ENCODE measurements at regions of chr21 and their contacts with region 1.

Region 1: DNA sequence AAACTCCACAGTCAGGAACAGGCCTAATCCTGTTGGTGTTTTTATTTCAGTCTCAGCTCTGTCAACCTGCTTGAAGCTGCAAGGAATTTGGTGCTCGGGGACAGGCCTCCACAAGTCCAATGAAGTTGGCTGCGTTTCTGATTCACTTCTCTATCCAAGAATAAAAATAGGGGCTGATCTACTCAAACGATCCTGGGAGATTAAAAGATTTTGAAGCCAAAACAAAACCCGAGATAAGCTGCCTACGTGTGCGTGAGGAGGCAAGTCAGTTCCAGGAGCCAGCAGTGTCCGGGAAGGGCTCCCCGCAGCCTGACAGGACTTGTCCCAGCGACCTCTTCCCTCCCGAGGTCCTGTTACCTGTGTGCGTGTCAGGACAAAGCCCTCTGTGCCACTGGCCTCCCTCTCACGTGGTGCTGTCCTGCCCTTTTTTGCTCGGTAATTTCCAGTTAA is 98.0 kb downstream of the ETS2 start:
- DNase-seq: no peak
- H3K4me3 ChIP-seq: no peak overlapping the region
- H3K27ac ChIP-seq: peak overlapping the region; percentile 88 to 95 (median 93)
- H3K4me1 ChIP-seq: peaks cover 25 to 53% (median 28%) of the 10 kb centered on the region in 3 donors
- H3K27me3 ChIP-seq: no peaks in the 10 kb centered on the region
- CTCF ChIP-seq: no peak
- POLR2A ChIP-seq: peak in 1 of 4 donors; percentile 2

Region 2: GRCh38 chr21:38605236-38605635 is 298.5 kb before region 1 on chr21:
- intact Hi-C with region 1: no loop called
- DNase-seq: no peak
- H3K4me3 ChIP-seq: no peak overlapping the region
- H3K27ac ChIP-seq: no peak overlapping the region
- H3K4me1 ChIP-seq: no peaks in the 10 kb centered on the region
- H3K27me3 ChIP-seq: peaks cover 0 to 2% (median 0%) of the 10 kb centered on the region in 4 donors
- CTCF ChIP-seq: no peak
- POLR2A ChIP-seq: no peak

Region 3: DNA sequence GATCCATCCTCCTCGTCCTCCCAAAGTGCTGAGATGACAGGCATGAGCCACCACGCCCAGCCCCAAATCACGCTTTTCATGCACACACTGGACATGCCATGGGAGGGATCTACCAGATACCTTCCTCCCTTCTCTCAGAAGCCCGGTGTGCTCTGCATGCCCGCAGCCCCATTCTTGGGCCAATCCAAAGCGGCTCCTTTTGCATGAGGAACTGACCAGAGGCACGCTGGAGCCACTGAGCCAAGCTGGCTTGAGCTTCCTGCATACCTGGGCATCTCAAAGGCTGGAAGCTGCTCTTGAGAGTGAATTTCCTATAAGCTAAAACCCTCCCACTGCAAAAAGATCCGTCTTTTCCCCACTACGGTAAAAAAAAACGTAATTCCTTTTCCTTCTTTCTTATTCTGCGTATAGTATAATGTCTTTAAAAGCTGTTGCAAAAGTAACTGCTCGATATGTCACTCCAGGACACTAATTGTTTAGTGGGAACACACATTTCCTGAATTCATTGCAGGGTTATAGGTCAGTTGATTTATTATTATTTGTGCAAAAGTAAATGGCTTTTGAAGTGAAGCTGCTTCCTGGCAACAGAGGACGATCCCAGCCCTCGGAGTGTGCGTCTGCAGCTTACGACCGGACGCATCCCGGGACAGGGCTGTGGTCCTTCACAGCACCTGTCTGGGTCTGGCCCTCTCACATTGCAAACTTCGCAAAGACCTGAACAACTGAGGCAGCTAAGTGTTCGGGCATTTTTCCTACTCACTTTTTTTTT is 159.8 kb before region 1 on chr21:
- intact Hi-C with region 1: loop called (anchors 10 kb)
- DNase-seq: no peak
- H3K4me3 ChIP-seq: peak overlapping the region in 1 of 4 donors; percentile 21
- H3K27ac ChIP-seq: peak overlapping the region in 3 of 4 donors; percentile 5 to 38 (median 6)
- H3K4me1 ChIP-seq: no peaks in the 10 kb centered on the region
- H3K27me3 ChIP-seq: no peaks in the 10 kb centered on the region
- CTCF ChIP-seq: no peak
- POLR2A ChIP-seq: no peak

Region 4: DNA sequence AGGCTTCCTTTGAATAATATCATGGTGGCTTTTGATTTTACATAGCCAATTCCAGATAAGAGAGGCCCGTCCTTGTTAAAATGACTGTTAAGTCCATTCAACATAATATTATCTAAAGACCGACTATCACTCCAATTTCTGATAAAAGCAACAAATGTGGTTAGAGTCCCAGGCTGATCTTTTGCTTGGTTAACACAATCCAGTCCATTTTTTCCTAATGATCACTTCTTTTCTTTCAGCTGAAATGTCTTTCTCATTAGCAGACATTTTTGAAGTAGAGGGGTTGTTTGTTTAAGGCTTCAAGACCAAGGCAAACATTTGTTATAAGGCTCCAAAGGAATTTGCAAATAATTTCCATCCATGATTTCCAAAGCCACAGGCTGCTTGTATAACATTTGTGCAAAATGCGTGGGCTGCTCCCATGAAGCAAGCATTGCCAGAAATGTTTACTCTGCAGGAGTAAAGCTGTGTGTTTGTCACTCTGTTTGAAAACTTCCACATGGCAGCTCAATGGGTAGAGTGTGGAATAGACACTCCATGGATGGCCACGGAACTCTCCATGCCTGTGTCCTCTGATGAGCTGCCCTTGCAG is 168.0 kb after region 1 on chr21:
- intact Hi-C with region 1: no loop called
- DNase-seq: no peak
- H3K4me3 ChIP-seq: no peak overlapping the region
- H3K27ac ChIP-seq: peak overlapping the region in 1 of 4 donors; percentile 36
- H3K4me1 ChIP-seq: peaks cover 0 to 34% (median 6%) of the 10 kb centered on the region in 3 donors
- H3K27me3 ChIP-seq: no peaks in the 10 kb centered on the region
- CTCF ChIP-seq: no peak
- POLR2A ChIP-seq: no peak

Measured in esophagus squamous epithelium (tissue), 5 donors.